B cell (primary cell): ENCODE measurements at regions of chr1 and their contacts with region 1.

Region 1: DNA sequence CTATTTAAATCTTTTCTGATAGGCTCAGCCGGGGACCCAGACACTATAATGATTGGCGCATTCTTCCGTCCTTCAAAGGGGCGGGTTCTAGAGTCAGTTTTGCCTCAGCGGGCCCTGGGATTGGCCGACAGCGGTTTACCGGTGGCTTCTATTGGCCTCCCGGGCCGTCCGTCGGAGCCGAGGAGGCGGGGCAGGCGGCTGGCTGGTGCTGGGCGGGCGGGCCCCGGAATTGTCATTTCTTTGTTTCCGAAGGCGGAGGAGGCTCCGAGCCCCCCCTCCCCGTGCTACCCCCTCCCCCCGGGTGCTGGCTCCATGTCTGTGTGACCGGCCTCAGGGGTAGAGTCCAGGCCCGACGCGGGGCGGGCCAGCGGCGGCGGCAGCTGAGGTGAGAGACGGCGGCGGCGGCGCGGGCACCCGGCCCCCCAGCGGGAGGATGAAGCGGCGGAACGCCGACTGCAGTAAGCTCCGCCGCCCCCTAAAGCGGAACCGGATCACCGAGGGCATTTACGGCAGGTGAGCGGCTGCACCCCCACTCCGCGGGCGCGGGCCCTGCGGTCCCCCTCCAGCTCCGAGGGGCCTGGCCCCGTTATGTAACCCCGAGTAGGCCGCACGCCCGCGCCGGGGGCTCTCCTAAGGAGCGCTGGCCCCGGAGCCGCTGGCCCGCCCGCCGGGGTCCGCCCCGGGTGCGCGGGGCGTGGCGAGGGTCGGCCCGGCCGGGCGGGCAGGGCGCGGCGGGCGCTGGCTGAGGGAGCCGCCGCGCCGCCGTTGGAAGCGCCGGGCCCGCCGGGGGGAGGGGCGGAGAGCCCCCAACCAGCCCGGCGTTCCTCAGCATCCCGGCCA is at the start of gene MACO1:
- DNase-seq: peak; percentile 97
- ATAC-seq: peak; percentile 83
- H3K4me3 ChIP-seq: peak within 1 kb of the TSS; percentile 75 to 100 (median 98)
- H3K4me3 Mint-ChIP-seq: peak within 1 kb of the TSS; percentile 99
- H3K27ac ChIP-seq: peak within 1 kb of the TSS; percentile 93 to 99
- H3K27ac Mint-ChIP-seq: peak within 1 kb of the TSS; percentile 99
- H3K4me1 ChIP-seq: peaks cover 18 to 34% of the 10 kb centered on the region in 2 donors
- H3K4me1 Mint-ChIP-seq: peaks cover 43% of the 10 kb centered on the region
- H3K27me3 ChIP-seq: no peaks in the 10 kb centered on the region
- H3K27me3 Mint-ChIP-seq: no peaks in the 10 kb centered on the region
- CTCF ChIP-seq: no peak
- total RNA-seq, gene MACO1: 20.7 and 21.2 TPM in 2 replicates

Region 2: DNA sequence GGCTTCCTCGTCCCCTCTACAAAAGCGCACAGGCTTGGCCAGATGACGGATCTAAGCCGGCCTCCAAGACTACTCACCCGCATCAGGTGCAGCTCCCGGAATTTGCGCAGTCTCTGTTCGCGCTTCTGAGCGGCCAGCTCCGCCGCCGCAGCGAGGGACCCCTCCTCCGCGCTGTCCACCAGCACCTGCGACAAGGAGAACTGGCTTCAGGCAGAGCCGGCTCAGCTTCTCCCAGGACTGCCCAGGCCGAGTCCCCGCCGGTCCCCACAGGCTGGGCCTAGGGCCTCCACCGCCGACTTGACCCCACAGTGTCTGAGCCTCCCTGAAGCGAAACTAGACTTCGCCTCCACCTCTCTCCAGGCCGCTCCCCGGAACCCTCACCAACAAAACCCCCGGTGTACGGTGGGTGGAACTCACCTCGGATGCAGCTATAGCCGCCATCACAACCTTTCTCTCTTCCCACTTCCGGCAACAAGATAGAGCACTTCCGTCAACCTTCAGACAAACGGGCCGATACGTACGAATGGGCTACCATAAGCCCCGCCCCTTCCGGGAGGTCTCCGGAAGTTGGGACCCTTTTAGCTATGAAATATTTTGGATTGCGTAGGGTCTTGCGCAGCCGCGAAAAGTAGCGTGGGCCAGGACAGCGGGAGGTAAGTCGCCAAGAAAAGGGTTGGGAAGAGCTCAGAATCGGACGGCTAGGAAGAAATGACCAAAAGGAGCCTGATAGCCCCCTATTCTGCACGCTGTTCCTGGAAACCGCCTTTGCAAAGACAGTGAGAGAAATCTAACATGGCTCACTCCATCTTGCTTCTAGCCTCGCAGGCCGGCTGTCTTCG is 198.6 kb before region 1 on chr1 and contains the start of gene SYF2:
- CTCF ChIA-PET with region 1: no interaction called
- POLR2A ChIA-PET with region 1: interaction called, 11 read pairs
- intact Hi-C with region 1: loop called (anchors 1 kb)
- DNase-seq: peak; percentile 94
- ATAC-seq: peak; percentile 84
- H3K4me3 ChIP-seq: peak within 1 kb of the TSS; percentile 81 to 99 (median 95)
- H3K4me3 Mint-ChIP-seq: no peak within 1 kb of the TSS
- H3K27ac ChIP-seq: peak within 1 kb of the TSS; percentile 91 to 96
- H3K27ac Mint-ChIP-seq: no peak within 1 kb of the TSS
- H3K4me1 ChIP-seq: peaks cover 25 to 35% of the 10 kb centered on the region in 2 donors
- H3K4me1 Mint-ChIP-seq: peaks cover 31% of the 10 kb centered on the region
- H3K27me3 ChIP-seq: no peaks in the 10 kb centered on the region
- H3K27me3 Mint-ChIP-seq: no peaks in the 10 kb centered on the region
- CTCF ChIP-seq: no peak
- total RNA-seq, gene SYF2: 57.4 and 67.3 TPM in 2 replicates

Region 3: DNA sequence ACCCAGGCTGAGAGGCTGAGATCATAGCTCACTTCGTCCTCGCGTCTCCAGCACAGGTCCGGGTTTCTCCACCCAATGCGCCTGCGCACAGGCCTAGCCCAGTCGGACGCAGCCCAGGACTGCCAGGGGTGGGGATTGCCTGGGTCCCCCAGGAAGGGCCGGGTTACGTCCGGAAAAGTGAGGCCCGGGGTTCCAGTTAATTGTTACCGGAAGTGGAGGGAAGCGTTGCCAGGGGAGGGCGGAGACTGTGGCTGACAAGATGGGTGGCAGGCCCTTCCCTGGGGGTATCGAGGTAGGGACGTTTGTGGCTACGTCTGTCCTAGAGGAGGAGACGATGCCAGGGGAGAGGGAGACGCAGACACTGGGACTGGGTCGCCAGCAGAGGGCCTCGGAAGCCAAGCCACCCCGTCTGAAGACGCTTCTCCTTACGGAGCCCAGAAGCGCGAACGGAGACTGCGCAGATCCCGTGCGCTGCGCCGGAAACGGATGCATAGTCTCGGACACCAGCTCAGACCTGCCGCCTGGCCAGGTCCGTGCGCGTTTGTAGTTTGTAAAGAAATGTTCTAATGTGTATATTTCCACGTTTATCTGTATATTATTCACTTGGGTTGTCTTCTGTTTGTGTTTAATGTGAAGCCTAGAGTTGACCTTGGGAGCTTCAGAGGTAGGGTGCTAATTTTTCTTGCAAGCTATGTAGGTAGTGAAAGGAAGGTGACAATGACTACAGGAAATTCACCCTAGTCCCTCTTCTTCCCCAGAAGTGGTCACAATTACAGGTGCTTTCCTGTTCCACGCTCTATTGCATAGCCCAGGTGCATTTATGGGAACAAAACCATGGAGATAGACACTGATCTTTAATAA is 191.0 kb before region 1 on chr1:
- CTCF ChIA-PET with region 1: no interaction called
- POLR2A ChIA-PET with region 1: interaction called, 11 read pairs
- intact Hi-C with region 1: loop called (anchors 2 kb)
- DNase-seq: peak; percentile 91
- ATAC-seq: peak; percentile 86
- H3K4me3 ChIP-seq: peak overlapping the region; percentile 50 to 68 (median 64)
- H3K4me3 Mint-ChIP-seq: peak overlapping the region; percentile 95
- H3K27ac ChIP-seq: peak overlapping the region; percentile 75 to 95
- H3K27ac Mint-ChIP-seq: peak overlapping the region; percentile 98
- H3K4me1 ChIP-seq: peaks cover 37 to 46% of the 10 kb centered on the region in 2 donors
- H3K4me1 Mint-ChIP-seq: peaks cover 60% of the 10 kb centered on the region
- H3K27me3 ChIP-seq: no peaks in the 10 kb centered on the region
- H3K27me3 Mint-ChIP-seq: no peaks in the 10 kb centered on the region
- CTCF ChIP-seq: peak; percentile 71

Region 4: DNA sequence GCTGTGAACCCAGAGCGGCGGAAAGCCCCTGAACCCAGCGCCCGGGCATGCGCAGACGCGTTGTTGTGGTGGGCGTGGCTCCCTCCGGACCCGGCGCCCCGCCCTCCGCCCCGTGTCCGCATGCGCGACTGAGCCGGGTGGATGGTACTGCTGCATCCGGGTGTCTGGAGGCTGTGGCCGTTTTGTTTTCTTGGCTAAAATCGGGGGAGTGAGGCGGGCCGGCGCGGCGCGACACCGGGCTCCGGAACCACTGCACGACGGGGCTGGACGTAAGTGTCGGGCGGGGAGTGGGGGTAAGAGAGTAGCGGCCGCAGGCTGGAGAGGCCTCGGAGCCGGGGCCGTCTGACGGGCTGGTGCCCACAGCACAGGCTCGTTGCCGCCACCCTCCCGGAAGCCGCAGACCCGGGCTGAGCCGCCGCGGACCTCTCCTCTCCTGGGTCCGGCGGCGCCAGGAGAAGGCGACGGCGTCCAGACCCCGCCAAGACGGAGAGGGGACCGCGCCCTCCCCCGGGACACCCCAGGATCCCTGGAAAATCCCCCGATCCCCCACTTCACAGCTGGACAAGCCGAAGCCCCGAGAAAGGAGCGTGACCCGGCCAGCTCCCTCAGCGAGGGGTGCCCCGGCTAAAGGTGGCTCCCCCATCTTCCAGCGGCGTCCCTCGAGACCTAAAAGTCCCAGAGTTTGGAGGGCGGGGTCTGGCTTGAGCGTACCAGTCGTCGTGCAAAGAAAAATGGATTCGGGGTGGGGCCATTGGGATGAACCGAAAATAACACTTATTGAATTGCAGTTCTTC is 92.5 kb before region 1 on chr1 and contains the start of gene TMEM50A:
- CTCF ChIA-PET with region 1: no interaction called
- POLR2A ChIA-PET with region 1: no interaction called
- intact Hi-C with region 1: loop called (anchors 5 kb)
- DNase-seq: peak; percentile 95
- ATAC-seq: peak; percentile 77
- H3K4me3 ChIP-seq: peak within 1 kb of the TSS; percentile 83 to 89 (median 84)
- H3K4me3 Mint-ChIP-seq: peak within 1 kb of the TSS; percentile 96
- H3K27ac ChIP-seq: peak within 1 kb of the TSS; percentile 86 to 87
- H3K27ac Mint-ChIP-seq: peak within 1 kb of the TSS; percentile 98
- H3K4me1 ChIP-seq: peaks cover 14% of the 10 kb centered on the region in 2 donors
- H3K4me1 Mint-ChIP-seq: peaks cover 30% of the 10 kb centered on the region
- H3K27me3 ChIP-seq: no peaks in the 10 kb centered on the region
- H3K27me3 Mint-ChIP-seq: no peaks in the 10 kb centered on the region
- CTCF ChIP-seq: no peak
- total RNA-seq, gene TMEM50A: 59.4 and 62.6 TPM in 2 replicates

Region 5: DNA sequence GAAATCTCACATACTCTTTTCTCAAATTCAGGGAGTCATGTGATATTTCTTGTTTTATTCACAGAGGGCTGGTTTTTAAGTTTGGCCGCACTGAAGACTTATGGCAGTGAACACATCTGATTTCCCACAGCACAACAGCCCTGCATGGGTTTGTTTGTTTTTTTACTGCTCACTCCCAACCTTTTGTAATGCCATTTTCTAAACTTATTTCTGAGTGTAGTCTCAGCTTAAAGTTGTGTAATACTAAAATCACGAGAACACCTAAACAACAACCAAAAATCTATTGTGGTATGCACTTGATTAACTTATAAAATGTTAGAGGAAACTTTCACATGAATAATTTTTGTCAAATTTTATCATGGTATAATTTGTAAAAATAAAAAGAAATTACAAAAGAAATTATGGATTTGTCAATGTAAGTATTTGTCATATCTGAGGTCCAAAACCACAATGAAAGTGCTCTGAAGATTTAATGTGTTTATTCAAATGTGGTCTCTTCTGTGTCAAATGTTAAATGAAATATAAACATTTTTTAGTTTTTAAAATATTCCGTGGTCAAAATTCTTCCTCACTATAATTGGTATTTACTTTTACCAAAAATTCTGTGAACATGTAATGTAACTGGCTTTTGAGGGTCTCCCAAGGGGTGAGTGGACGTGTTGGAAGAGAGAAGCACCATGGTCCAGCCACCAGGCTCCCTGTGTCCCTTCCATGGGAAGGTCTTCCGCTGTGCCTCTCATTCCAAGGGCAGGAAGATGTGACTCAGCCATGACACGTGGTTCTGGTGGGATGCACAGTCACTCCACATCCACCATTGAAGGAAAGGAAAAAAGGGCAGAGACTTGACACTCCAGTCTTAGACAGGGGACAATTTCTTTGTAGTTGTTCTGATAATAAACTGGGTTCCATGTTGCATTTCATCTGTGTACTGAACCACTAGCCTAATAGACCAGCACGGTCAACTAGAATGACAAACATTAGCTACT is 70.0 kb before region 1 on chr1:
- CTCF ChIA-PET with region 1: no interaction called
- POLR2A ChIA-PET with region 1: no interaction called
- intact Hi-C with region 1: no loop called
- DNase-seq: no peak
- ATAC-seq: no peak
- H3K4me3 ChIP-seq: no peak overlapping the region
- H3K4me3 Mint-ChIP-seq: no peak overlapping the region
- H3K27ac ChIP-seq: no peak overlapping the region
- H3K27ac Mint-ChIP-seq: peak overlapping the region; percentile 5
- H3K4me1 ChIP-seq: no peaks in the 10 kb centered on the region
- H3K4me1 Mint-ChIP-seq: peaks cover under 1% of the 10 kb centered on the region
- H3K27me3 ChIP-seq: no peaks in the 10 kb centered on the region
- H3K27me3 Mint-ChIP-seq: no peaks in the 10 kb centered on the region
- CTCF ChIP-seq: no peak

Region 6: DNA sequence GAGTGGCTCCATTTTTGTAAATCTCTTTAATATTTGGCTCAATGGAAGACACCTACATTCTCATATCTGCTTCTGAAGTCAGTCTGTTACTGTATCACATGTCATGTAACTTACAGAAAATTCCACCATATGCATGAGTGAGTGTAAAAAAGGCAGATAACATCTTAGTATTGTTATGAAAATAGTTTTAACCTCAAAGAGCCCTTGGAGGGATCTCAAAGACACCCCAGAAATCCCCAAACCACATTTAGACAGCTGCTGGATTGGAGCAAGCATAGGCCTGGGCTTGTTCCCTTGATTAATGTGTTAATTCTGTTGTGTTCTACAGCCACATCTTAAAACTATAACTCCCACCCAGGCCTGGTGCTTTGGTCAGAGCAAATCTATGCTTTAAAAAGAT is 16.7 kb after region 1 on chr1:
- CTCF ChIA-PET with region 1: no interaction called
- POLR2A ChIA-PET with region 1: no interaction called
- intact Hi-C with region 1: no loop called
- DNase-seq: no peak
- ATAC-seq: no peak
- H3K4me3 ChIP-seq: no peak overlapping the region
- H3K4me3 Mint-ChIP-seq: no peak overlapping the region
- H3K27ac ChIP-seq: no peak overlapping the region
- H3K27ac Mint-ChIP-seq: no peak overlapping the region
- H3K4me1 ChIP-seq: peaks cover 9 to 13% of the 10 kb centered on the region in 2 donors
- H3K4me1 Mint-ChIP-seq: peaks cover 23% of the 10 kb centered on the region
- H3K27me3 ChIP-seq: no peaks in the 10 kb centered on the region
- H3K27me3 Mint-ChIP-seq: no peaks in the 10 kb centered on the region
- CTCF ChIP-seq: no peak

Region 7: GRCh38 chr1:25616095-25616986 is 185.5 kb after region 1 on chr1 and contains the start of gene MAN1C1:
- CTCF ChIA-PET with region 1: no interaction called
- POLR2A ChIA-PET with region 1: no interaction called
- intact Hi-C with region 1: loop called (anchors 2 kb)
- DNase-seq: peak; percentile 88
- ATAC-seq: peak; percentile 92
- H3K4me3 ChIP-seq: peak within 1 kb of the TSS in 4 of 5 experiments; percentile 69 to 78 (median 74)
- H3K4me3 Mint-ChIP-seq: peak within 1 kb of the TSS; percentile 87
- H3K27ac ChIP-seq: no peak within 1 kb of the TSS
- H3K27ac Mint-ChIP-seq: peak within 1 kb of the TSS; percentile 69
- H3K4me1 ChIP-seq: peaks cover 8 to 22% of the 10 kb centered on the region in 2 donors
- H3K4me1 Mint-ChIP-seq: peaks cover 23% of the 10 kb centered on the region
- H3K27me3 ChIP-seq: peaks cover 0 to 45% (median 24%) of the 10 kb centered on the region in 4 experiments
- H3K27me3 Mint-ChIP-seq: peaks cover 43% of the 10 kb centered on the region
- CTCF ChIP-seq: peak; percentile 38
- total RNA-seq, gene MAN1C1: 0.70 and 0.89 TPM in 2 replicates

Region 8: DNA sequence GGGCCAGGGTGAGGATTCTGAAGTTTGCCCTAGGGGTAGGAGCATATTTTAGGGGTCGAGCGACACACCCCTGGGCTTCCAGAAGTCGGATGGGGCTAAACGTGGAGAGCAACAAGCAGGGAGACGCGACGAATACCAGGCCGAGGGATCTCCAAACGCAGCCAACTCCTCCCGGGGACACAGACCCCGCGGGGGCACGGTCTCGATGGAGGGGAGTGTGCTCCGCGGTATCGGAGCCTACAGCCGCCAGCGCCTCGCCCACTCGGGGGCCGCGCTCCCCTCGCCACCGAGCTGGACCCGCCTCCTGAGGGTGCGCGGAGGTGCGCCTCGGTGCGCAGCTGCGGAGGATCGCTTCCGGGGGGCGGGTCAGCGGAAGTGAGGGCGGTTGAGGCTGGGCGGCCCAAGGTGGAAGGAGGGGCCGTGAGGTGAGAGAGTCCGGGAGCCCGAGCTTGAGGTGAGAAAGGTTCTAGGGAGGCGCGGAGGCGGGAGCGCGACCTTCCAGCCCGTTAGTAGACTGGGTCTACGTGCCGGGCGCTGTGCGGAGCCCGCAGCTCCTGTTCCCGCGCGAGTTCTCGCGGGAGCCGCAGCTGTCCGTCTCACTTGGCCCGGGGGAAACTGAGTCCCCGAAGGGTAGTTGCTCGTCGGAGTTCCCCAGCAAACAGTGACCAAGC is 388.8 kb after region 1 on chr1 and contains the start of gene MTFR1L:
- CTCF ChIA-PET with region 1: no interaction called
- POLR2A ChIA-PET with region 1: no interaction called
- intact Hi-C with region 1: loop called (anchors 2 kb)
- DNase-seq: peak; percentile 94
- ATAC-seq: peak; percentile 93
- H3K4me3 ChIP-seq: peak within 1 kb of the TSS; percentile 66 to 99 (median 84)
- H3K4me3 Mint-ChIP-seq: peak within 1 kb of the TSS; percentile 95
- H3K27ac ChIP-seq: peak within 1 kb of the TSS; percentile 76 to 84
- H3K27ac Mint-ChIP-seq: peak within 1 kb of the TSS; percentile 94
- H3K4me1 ChIP-seq: peaks cover 18 to 24% of the 10 kb centered on the region in 2 donors
- H3K4me1 Mint-ChIP-seq: peaks cover 29% of the 10 kb centered on the region
- H3K27me3 ChIP-seq: no peaks in the 10 kb centered on the region
- H3K27me3 Mint-ChIP-seq: no peaks in the 10 kb centered on the region
- CTCF ChIP-seq: no peak
- total RNA-seq, gene MTFR1L: 40.9 and 41.5 TPM in 2 replicates